Breast epithelium (tissue), 4 donors: ENCODE measurements at regions of chr13 and their contacts with region 1.

Region 1: GRCh38 chr13:49840266-49840665 is 47.8 kb upstream of the KPNA3 start:
- DNase-seq: no peak
- H3K4me3 ChIP-seq: no peak overlapping the region
- H3K27ac ChIP-seq: no peak overlapping the region
- H3K4me1 ChIP-seq: no peaks in the 10 kb centered on the region
- H3K27me3 ChIP-seq: no peaks in the 10 kb centered on the region
- CTCF ChIP-seq: no peak
- POLR2A ChIP-seq: no peak

Region 2: GRCh38 chr13:49569956-49570689 is 270.1 kb before region 1 on chr13:
- intact Hi-C with region 1: no loop called
- DNase-seq: no peak
- H3K4me3 ChIP-seq: no peak overlapping the region
- H3K27ac ChIP-seq: peak overlapping the region; percentile 3 to 33
- H3K4me1 ChIP-seq: no peaks in the 10 kb centered on the region
- H3K27me3 ChIP-seq: no peaks in the 10 kb centered on the region
- CTCF ChIP-seq: no peak
- POLR2A ChIP-seq: no peak

Region 3: DNA sequence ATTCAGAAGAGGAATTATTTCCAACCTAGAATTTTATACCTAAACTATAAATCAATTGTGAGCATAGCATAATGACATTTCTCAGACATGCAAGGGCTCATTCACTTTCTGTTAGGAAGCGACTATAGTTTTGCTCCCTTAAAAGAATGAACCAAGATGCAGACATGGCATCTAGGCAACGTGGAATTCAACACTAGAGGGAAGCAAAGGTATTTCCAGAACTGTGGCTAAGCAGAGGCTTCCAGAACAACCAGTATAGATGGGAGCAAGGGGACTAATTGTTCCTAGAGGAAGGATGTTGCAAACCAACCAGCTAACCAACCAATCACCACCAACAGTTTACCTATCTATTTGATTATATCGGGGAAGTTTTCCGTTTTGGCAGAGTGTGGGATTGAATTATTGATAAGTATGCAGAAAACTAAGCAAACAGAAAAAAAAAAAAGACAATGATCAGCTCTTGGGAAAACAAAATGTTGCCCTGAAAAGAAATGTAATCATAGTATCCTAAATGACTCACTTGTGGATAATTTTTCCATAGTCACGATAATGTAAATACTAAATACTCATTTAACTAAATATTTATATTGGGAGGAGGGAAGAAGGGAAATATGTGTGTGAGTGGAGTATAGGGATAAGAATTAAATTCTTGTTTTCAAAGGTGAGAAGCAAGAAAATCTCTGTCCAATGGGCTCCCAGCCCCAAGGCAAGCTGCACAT is 190.9 kb before region 1 on chr13:
- intact Hi-C with region 1: loop called (anchors 10 kb)
- DNase-seq: no peak
- H3K4me3 ChIP-seq: no peak overlapping the region
- H3K27ac ChIP-seq: no peak overlapping the region
- H3K4me1 ChIP-seq: no peaks in the 10 kb centered on the region
- H3K27me3 ChIP-seq: no peaks in the 10 kb centered on the region
- CTCF ChIP-seq: peak in 1 of 3 donors; percentile 10
- POLR2A ChIP-seq: no peak